Activated T-helper 1 cell treated with anti-CD3 and anti-CD28 coated beads, Interleukin-12 subunit alpha, Interleukin-12 subunit beta, Interleukin-2, Interleukin-4 antibody, amounts not matched to agents 30 ng/mL and 10 ng/mL and 1 ng/mL, durations not matched to agents 14 hours and 24 hours and 36 hours (primary cell): ENCODE measurements at regions of chr5 and their contacts with region 1.

Region 1: GRCh38 chr5:1763548-1763911 is 36.1 kb downstream of the MRPL36 start:
- DNase-seq: peak; percentile 19
- H3K4me3 Mint-ChIP-seq: no peak overlapping the region
- H3K27ac Mint-ChIP-seq: no peak overlapping the region
- H3K4me1 Mint-ChIP-seq: no peaks in the 10 kb centered on the region
- H3K27me3 Mint-ChIP-seq: peaks cover 4% of the 10 kb centered on the region

Region 2: GRCh38 chr5:1874771-1875220 is 111.3 kb after region 1 on chr5:
- intact Hi-C with region 1: loop called (anchors 5 kb)
- DNase-seq: no peak
- H3K4me3 Mint-ChIP-seq: no peak overlapping the region
- H3K27ac Mint-ChIP-seq: no peak overlapping the region
- H3K4me1 Mint-ChIP-seq: no peaks in the 10 kb centered on the region
- H3K27me3 Mint-ChIP-seq: peaks cover 49% of the 10 kb centered on the region

Region 3: DNA sequence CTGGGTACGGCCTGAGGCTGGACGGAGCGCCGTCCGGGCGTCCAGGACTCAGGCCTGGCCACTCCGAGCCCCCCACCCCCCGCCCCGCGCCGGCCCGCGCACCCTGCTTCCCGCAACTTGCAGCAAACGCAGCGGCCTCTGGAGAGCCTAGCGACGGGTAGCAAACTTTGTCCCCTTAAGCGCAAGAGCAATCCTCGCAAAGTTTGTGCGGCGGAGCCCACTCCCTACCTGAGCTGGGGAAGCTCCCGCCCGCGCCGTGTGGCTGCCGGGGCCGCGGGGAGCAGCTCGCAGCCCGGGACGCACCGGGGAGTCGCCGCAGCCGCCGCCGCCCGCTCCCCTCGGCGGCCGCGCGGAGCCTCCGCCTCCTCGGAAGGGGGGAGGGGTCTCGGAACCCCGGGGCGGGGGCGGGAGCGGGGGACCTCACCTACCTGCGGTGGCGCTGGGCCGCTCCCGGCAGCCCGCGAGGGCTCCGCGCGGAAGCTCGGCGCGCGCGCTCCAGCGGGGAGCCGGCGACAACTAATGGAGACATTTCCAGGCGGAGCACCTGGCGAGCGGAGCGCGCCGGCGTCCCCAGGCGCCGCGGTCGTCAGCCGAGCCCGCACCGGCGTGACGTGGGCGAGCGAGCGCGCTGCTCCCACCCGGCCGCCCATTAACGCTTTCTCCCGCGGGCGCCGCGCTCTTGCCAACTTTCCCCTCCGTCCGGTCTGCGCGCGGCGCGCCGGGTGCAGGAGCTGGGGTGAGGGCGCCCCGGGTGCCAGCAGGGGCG is 123.3 kb after region 1 on chr5:
- intact Hi-C with region 1: no loop called
- DNase-seq: no peak
- H3K4me3 Mint-ChIP-seq: no peak overlapping the region
- H3K27ac Mint-ChIP-seq: no peak overlapping the region
- H3K4me1 Mint-ChIP-seq: no peaks in the 10 kb centered on the region
- H3K27me3 Mint-ChIP-seq: peaks cover 25% of the 10 kb centered on the region

Region 4: DNA sequence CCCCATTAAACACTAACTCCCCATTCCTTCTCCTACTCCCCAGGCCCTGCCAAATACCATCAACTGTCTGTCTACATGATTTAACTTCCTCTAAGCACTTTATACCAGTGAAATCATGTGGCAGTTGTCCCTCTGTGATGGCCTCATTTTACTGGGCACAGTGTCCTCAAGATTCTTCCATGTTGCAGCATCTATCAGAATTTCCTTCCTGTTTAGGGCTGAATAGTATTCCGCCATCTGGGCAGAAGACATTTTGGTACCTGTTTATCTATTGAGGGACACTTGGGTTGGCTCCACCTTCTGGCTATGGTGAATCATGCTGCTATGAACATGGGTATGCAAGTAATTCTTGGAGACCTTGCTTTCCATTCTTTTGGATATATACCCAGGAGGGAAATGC is 178.6 kb after region 1 on chr5:
- intact Hi-C with region 1: loop called (anchors 2 kb)
- DNase-seq: no peak
- H3K4me3 Mint-ChIP-seq: no peak overlapping the region
- H3K27ac Mint-ChIP-seq: no peak overlapping the region
- H3K4me1 Mint-ChIP-seq: no peaks in the 10 kb centered on the region
- H3K27me3 Mint-ChIP-seq: peaks cover 14% of the 10 kb centered on the region